GM12878 (cell line): ENCODE measurements at regions of chr9 and their contacts with region 1.

Region 1: DNA sequence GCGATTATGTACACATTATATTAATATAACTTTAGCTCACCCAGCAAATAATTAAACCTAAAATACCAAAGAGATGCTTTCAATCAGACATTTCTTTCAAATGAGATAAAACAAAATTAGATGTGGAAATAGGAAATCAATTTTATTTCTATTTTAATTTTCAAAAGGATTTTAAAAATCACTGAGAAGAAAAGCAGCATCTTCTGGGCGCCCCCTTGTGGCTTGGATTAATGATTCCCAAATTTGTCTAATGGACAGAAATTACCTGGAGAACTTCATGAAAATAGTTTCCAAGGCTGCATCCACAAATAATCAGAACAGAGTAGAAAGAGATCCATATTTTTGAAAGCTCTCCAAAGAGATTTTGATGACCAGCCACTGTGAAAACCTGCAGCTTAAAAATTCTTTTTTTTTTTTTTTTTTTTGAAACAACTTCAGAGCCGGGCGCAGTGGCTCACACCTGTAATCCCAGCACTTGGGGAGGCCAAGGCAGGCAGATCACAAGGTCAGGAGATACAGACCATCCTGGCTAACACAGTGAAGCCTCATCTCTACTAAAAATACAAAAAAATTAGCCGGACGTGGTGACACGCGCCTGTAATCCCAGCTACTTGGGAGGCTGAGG is 50.9 kb upstream of the CEMIP2 start:
- DNase-seq: no peak
- ATAC-seq: no peak
- H3K4me3 ChIP-seq: no peak overlapping the region
- H3K27ac ChIP-seq: no peak overlapping the region
- H3K4me1 ChIP-seq: no peaks in the 10 kb centered on the region
- H3K27me3 ChIP-seq: no peaks in the 10 kb centered on the region
- CTCF ChIP-seq: peak; percentile 56 to 62 (median 58); a peak in 5 of 6 replicates
- EP300 ChIP-seq: no peak
- POLR2A ChIP-seq: no peak
- RAD21 ChIP-seq: peak; percentile 69

Region 2: DNA sequence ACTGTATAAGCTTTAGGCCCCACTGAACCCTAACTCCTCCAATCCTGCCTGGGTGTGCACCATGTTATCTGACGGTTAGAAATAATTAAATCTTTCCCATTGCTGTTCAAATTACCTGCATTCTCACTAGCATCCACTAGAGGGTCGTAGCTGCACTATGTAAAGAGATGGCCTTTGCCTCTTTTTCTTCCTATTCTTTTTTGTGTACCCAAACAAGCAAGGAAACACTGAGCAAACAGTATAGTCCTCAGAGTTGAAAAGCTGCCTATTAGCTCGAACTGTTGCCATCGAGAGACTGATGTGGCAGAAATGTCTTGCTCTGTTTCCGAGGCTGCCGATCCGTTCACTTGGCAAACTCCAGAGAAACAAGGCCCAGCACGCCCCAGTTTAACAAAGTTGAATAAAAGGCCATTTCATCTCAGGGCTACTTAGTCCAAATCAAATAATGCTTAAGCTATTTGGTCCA is 534.0 kb before region 1 on chr9:
- CTCF ChIA-PET with region 1: interaction called, 29 read pairs
- POLR2A ChIA-PET with region 1: no interaction called
- RAD21 ChIA-PET with region 1: no interaction called
- SMC1A ChIA-PET with region 1: interaction called, 13 read pairs
- in situ Hi-C with region 1: no loop called
- intact Hi-C with region 1: loop called (anchors 5 kb)
- DNase-seq: no peak
- ATAC-seq: peak; percentile 94
- H3K4me3 ChIP-seq: no peak overlapping the region
- H3K27ac ChIP-seq: no peak overlapping the region
- H3K4me1 ChIP-seq: no peaks in the 10 kb centered on the region
- H3K27me3 ChIP-seq: no peaks in the 10 kb centered on the region
- CTCF ChIP-seq: peak; percentile 84 to 93 (median 90)
- EP300 ChIP-seq: no peak
- POLR2A ChIP-seq: no peak
- RAD21 ChIP-seq: peak; percentile 97

Region 3: DNA sequence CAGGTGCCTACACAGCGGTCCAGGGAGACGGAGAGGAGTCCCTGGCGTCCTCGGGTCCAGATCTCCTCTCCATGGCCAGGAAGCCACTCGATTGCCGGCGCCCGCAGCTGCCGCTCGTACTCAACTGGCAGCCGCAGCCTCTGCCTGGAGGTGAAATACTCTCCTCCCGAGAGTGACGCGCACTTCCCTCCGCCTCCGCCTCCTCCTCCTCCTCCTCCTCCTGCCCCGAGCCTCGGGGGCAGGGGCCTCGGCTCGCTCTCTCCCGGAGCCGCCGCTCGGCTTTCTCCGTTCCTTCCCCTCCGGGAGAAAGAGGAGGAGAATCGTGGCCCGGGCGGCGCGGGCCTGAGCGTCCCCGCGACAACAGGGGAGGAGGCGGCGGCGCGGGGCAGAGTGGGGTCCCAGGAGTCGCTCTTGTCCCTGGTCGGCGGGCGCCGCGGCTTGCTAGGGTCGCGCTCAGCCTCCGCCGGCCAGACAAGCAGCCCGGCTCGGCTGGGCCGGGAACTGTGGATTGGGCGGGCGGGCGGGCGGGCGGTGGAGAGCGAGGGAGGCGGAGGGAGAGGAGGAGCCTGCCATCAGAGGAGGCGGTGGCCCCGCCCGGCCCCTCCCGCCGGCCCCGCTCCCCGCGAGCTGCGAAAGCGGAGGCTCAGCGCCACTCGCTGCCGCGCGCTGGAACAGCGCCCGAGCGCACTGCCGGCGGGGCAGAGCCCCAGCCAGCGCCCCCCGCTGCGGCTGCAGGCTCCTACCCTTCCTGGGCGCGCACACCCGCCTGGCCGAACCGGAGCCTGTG is 50.6 kb before region 1 on chr9 and contains the start of gene CEMIP2:
- CTCF ChIA-PET with region 1: interaction called, 8 read pairs
- POLR2A ChIA-PET with region 1: no interaction called
- RAD21 ChIA-PET with region 1: no interaction called
- SMC1A ChIA-PET with region 1: interaction called, 3 read pairs
- in situ Hi-C with region 1: no loop called
- intact Hi-C with region 1: loop called (anchors 5 kb)
- DNase-seq: no peak
- ATAC-seq: peak; percentile 93
- H3K4me3 ChIP-seq: peak within 1 kb of the TSS; percentile 84
- H3K27ac ChIP-seq: peak within 1 kb of the TSS; percentile 37; the same call in 1 of the 2 replicates
- H3K4me1 ChIP-seq: peaks cover 14% of the 10 kb centered on the region
- H3K27me3 ChIP-seq: peaks cover 0 to 18% of the 10 kb centered on the region in 2 experiments; a peak in 2 of 4 replicates
- CTCF ChIP-seq: peak; percentile 44 to 81 (median 59); a peak in 5 of 6 replicates
- EP300 ChIP-seq: no peak
- POLR2A ChIP-seq: peak; percentile 74
- RAD21 ChIP-seq: peak; percentile 76
- polyA plus RNA-seq, gene CEMIP2: 0.50 to 0.79 TPM

Region 4: DNA sequence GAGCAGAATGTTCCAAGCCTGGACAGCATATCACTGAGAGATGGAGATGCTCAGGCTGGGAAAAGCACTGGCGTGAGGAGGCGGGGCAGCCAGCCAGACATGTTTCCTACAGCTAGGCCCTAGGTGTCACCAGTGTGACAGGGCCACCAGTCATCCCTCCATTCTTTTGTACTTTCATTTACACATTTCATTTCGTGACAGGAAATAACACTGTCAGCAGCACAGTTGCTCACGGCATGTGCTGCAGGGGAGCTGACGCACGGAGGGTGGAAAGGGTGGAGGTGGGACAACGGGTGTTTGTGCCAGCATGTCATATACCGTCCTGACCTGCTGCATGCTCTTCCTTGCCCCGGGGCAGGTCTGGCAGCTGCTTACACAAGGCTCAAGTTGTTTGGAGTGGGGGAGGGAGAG is 36.1 kb before region 1 on chr9:
- CTCF ChIA-PET with region 1: interaction called, 13 read pairs
- POLR2A ChIA-PET with region 1: no interaction called
- RAD21 ChIA-PET with region 1: interaction called, 6 read pairs
- SMC1A ChIA-PET with region 1: interaction called, 17 read pairs
- in situ Hi-C with region 1: no loop called
- intact Hi-C with region 1: loop called (anchors 5 kb)
- DNase-seq: no peak
- ATAC-seq: peak; percentile 89
- H3K4me3 ChIP-seq: no peak overlapping the region; the same call in 1 of the 2 replicates
- H3K27ac ChIP-seq: no peak overlapping the region
- H3K4me1 ChIP-seq: peaks cover 23% of the 10 kb centered on the region
- H3K27me3 ChIP-seq: no peaks in the 10 kb centered on the region
- CTCF ChIP-seq: peak in 2 of 3 experiments; percentile 35 to 37; a peak in 3 of 6 replicates
- EP300 ChIP-seq: peak; percentile 79 to 95; a peak in 3 of 4 replicates
- POLR2A ChIP-seq: 0 out of 2 replicates have a peak, but pooled peaks have one; percentile 24
- RAD21 ChIP-seq: peak; percentile 49

Region 5: DNA sequence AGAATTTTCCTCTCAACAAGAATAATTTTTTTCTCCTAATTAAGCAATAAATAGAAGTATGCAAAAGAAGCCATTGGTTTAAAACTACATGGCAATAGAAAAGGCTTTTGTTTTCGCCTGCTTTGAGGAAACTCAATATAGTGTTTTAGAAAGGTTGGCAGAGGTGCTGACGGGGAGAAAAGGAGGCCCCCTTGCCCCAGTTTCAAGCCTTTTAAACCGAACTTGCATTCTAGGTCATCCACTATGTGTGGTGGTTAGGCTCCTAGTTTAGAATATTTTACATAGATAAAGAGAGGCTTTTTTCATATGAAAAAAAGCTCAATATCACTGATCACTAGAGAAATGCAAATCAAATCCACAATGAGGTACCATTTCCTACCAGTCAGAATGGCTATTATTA is 17.4 kb before region 1 on chr9:
- CTCF ChIA-PET with region 1: interaction called, 22 read pairs
- POLR2A ChIA-PET with region 1: no interaction called
- RAD21 ChIA-PET with region 1: interaction called, 6 read pairs
- SMC1A ChIA-PET with region 1: interaction called, 30 read pairs
- in situ Hi-C with region 1: no loop called
- intact Hi-C with region 1: no loop called
- DNase-seq: no peak
- ATAC-seq: no peak
- H3K4me3 ChIP-seq: no peak overlapping the region
- H3K27ac ChIP-seq: no peak overlapping the region
- H3K4me1 ChIP-seq: peaks cover 3% of the 10 kb centered on the region; the same call in 1 of the 2 replicates
- H3K27me3 ChIP-seq: no peaks in the 10 kb centered on the region
- CTCF ChIP-seq: no peak
- EP300 ChIP-seq: no peak
- POLR2A ChIP-seq: no peak
- RAD21 ChIP-seq: no peak

Region 6: GRCh38 chr9:71830153-71830552 is 10.9 kb after region 1 on chr9:
- CTCF ChIA-PET with region 1: interaction called, 22 read pairs
- POLR2A ChIA-PET with region 1: no interaction called
- RAD21 ChIA-PET with region 1: no interaction called
- SMC1A ChIA-PET with region 1: interaction called, 4 read pairs
- in situ Hi-C with region 1: no loop called
- intact Hi-C with region 1: no loop called
- DNase-seq: no peak
- ATAC-seq: no peak
- H3K4me3 ChIP-seq: no peak overlapping the region
- H3K27ac ChIP-seq: no peak overlapping the region
- H3K4me1 ChIP-seq: no peaks in the 10 kb centered on the region
- H3K27me3 ChIP-seq: no peaks in the 10 kb centered on the region
- CTCF ChIP-seq: no peak
- EP300 ChIP-seq: no peak
- POLR2A ChIP-seq: no peak
- RAD21 ChIP-seq: no peak

Region 7: GRCh38 chr9:71962328-71962727 is 143.1 kb after region 1 on chr9:
- CTCF ChIA-PET with region 1: no interaction called
- POLR2A ChIA-PET with region 1: no interaction called
- RAD21 ChIA-PET with region 1: no interaction called
- SMC1A ChIA-PET with region 1: no interaction called
- in situ Hi-C with region 1: no loop called
- intact Hi-C with region 1: no loop called
- DNase-seq: no peak
- ATAC-seq: no peak
- H3K4me3 ChIP-seq: no peak overlapping the region
- H3K27ac ChIP-seq: no peak overlapping the region
- H3K4me1 ChIP-seq: no peaks in the 10 kb centered on the region
- H3K27me3 ChIP-seq: no peaks in the 10 kb centered on the region
- CTCF ChIP-seq: no peak
- EP300 ChIP-seq: no peak
- POLR2A ChIP-seq: no peak
- RAD21 ChIP-seq: no peak

Region 8: DNA sequence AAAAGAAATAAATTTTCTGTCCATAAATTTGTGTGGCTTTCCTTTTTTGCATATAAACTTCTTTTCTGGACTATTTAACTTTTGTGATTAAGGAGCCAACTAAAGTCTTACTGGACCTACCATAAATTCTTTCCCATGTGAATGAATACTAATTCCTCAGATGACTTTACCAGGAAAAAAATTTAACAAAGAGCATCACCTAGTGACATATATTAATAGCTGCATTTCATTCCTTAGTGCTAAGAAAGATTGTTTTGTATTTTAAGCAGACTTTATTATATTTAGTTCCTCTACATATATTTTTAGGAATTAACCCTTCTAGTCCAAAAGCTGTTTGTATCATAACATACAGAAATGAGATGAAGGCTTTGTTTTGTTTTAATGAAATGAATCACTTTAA is 156.6 kb after region 1 on chr9:
- CTCF ChIA-PET with region 1: interaction called, 14 read pairs
- POLR2A ChIA-PET with region 1: no interaction called
- RAD21 ChIA-PET with region 1: no interaction called
- SMC1A ChIA-PET with region 1: interaction called, 5 read pairs
- in situ Hi-C with region 1: no loop called
- intact Hi-C with region 1: no loop called
- DNase-seq: no peak
- ATAC-seq: no peak
- H3K4me3 ChIP-seq: no peak overlapping the region
- H3K27ac ChIP-seq: no peak overlapping the region
- H3K4me1 ChIP-seq: no peaks in the 10 kb centered on the region
- H3K27me3 ChIP-seq: no peaks in the 10 kb centered on the region
- CTCF ChIP-seq: peak in 1 of 3 experiments; percentile 44; a peak in 2 of 6 replicates
- EP300 ChIP-seq: no peak
- POLR2A ChIP-seq: no peak
- RAD21 ChIP-seq: peak; percentile 30; the same call in 1 of the 2 replicates